ENCODE measurements at regions of chr15 and their contacts with region 1.

Region 1: GRCh38 chr15:70875001-70875782 is 17.0 kb downstream of the THAP10 start:
- DNase-seq: peak in 1 of 2 experiments; percentile 42
- ATAC-seq: peak; percentile 83 to 88; a peak in 4 of 6 replicates
- H3K4me3 ChIP-seq: no peak overlapping the region
- H3K27ac ChIP-seq: peak overlapping the region in 1 of 2 experiments; percentile 15; a peak in 3 of 6 replicates
- H3K4me1 ChIP-seq: peaks cover 7% of the 10 kb centered on the region; the same call in 2 of the 3 replicates
- CTCF ChIP-seq: peak; percentile 97
- EP300 ChIP-seq: no peak
- POLR2A ChIP-seq: no peak
- RAD21 ChIP-seq: peak; percentile 95

Region 2: DNA sequence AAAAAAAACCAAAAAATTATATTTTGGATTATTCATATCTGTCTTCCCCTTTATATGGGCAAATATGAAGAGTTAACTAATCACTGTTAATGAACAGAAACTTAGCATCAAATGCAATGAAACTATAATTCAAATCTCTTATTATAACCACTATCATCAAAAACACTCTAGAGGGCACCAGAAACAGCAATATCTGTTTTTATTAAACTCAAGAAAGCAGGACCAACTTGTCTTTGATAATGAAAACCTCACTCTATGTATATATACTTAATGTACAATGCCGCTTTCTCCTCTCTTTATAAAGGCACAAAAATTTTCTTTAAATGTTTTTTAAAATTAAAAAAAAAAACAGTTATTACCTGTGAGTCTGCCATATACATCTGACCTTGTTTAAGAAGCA is 204.5 kb before region 1 on chr15:
- CTCF ChIA-PET with region 1: interaction called, 22 read pairs
- POLR2A ChIA-PET with region 1: no interaction called
- DNase-seq: no peak
- ATAC-seq: no peak
- H3K4me3 ChIP-seq: no peak overlapping the region
- H3K27ac ChIP-seq: no peak overlapping the region
- H3K4me1 ChIP-seq: peaks cover 6% of the 10 kb centered on the region
- CTCF ChIP-seq: peak; percentile 64
- EP300 ChIP-seq: no peak
- POLR2A ChIP-seq: no peak
- RAD21 ChIP-seq: peak; percentile 65 to 67

Region 3: DNA sequence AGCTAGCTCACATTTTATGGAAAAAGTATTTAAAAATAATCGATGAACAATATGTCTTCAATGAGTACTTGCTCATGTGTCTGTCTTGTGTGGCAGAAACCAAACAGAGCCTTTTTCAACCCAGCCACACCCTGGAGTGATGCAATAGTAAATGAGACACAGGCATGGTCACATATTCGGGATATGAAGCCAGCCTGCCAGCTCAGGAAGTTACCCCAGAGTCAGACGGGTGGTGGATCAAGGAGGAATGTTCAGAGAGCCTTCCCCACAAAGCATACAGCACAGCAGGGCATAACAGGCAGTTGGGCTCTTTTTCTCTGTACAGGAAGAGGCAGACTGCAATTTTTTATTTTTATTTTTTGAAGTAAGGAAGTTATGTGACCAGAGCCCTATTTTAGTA is 48.6 kb before region 1 on chr15:
- CTCF ChIA-PET with region 1: interaction called, 331 read pairs
- POLR2A ChIA-PET with region 1: interaction called, 5 read pairs
- DNase-seq: peak; percentile 58 to 78
- ATAC-seq: peak; percentile 67 to 68; a peak in 5 of 6 replicates
- H3K4me3 ChIP-seq: no peak overlapping the region
- H3K27ac ChIP-seq: peak overlapping the region; percentile 69 to 85
- H3K4me1 ChIP-seq: peaks cover 41% of the 10 kb centered on the region
- CTCF ChIP-seq: no peak
- EP300 ChIP-seq: no peak
- POLR2A ChIP-seq: no peak
- RAD21 ChIP-seq: no peak

Region 4: DNA sequence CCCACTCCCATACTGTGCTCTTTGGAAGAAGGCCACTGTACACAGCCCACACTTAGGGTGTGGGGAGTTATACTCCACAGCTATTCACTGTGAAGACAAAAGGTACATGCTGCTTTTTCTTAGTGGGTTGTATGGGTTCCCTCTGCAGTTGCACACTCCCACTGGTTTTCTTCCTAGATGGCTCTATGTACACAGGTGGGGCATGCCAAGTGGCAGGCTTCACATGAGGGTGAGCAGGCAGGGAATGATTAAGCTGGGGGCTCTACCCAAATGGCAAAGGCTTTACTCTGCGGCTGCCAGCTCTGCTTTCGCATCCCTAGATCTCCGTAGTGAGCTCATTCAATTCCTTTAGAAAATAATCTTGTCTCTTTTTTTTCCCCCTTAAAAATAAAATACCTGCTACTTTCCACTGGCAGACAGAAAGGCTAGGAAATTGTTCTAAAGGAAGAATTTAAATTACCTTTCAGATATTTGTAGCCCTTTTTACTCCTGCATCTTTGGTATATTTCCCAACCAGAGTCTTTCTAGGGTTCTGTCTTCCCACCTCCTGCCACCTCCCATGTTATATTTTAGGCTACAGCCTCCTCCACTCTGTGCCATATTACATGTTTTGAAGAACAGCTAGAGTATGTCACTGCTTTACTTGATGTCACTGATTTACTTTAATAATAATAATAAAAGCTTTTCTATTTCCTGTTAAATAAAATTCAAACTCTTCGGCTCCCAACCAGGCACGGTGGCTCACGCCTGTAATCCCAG is 29.4 kb before region 1 on chr15:
- CTCF ChIA-PET with region 1: interaction called, 300 read pairs
- POLR2A ChIA-PET with region 1: no interaction called
- DNase-seq: no peak
- ATAC-seq: no peak
- H3K4me3 ChIP-seq: no peak overlapping the region
- H3K27ac ChIP-seq: no peak overlapping the region
- H3K4me1 ChIP-seq: no peaks in the 10 kb centered on the region
- CTCF ChIP-seq: no peak
- EP300 ChIP-seq: no peak
- POLR2A ChIP-seq: no peak
- RAD21 ChIP-seq: no peak

Region 5: DNA sequence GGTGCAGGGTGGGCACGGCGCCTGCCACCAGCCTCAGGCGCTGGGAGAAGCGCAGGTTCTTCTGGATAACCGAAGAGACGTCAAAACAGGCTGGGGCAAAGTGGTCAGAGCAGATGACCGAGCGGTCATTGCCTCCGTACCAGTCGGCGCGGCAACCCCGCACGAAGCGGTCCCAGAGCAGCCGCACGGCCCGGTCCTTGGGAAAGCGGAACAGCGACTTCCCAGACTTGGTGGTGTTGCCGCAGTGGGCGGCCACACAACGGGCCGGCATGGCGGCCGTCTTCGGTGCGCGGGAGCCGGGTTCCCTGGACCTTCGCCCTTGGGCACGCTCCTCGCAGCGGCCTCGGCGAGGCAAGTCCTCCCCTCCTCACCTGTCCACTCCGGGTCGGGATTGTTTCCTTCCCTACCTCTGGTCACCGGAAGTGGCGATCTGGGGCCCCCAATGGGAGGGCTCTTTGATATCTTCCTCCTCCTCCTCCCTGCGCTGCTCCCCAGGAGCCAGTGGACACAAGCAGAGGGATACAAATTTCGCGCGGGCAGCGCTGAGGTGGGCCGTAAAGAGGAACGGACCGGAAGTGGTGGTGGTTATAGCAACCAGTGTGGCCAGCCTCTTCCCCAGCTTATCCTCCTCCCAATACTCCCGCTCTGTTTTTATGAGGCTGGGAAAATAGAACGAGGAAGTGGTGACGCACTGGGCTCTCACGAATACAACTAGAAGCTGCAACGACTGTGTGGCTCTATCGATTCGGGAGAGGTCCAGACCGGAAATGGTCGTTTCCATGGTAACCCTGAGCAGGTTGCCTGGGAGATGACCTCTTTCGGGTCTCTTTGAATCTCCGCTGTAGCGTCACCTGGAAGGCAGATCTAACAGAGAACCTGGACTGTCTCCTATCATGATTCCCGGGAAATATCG is 17.1 kb after region 1 on chr15 and contains the starts of genes LRRC49 and THAP10:
- CTCF ChIA-PET with region 1: interaction called, 49 read pairs
- POLR2A ChIA-PET with region 1: no interaction called
- DNase-seq: peak; percentile 80 to 98
- ATAC-seq: peak; percentile 98 to 99
- H3K4me3 ChIP-seq: peak within 1 kb of the TSS; percentile 73
- H3K27ac ChIP-seq: peak within 1 kb of the TSS; percentile 85 to 91
- H3K4me1 ChIP-seq: peaks cover 12% of the 10 kb centered on the region
- CTCF ChIP-seq: no peak
- EP300 ChIP-seq: no peak
- POLR2A ChIP-seq: peak; percentile 58
- RAD21 ChIP-seq: peak in 1 of 2 experiments; percentile 1; a peak in 2 of 5 replicates
- polyA plus RNA-seq, gene LRRC49: 12.2 and 14.3 TPM in 2 replicates
- polyA plus RNA-seq, gene THAP10: 7.7 and 9.4 TPM in 2 replicates

Measured in A549 (cell line).